ENCODE measurements at regions of chr1 and their contacts with region 1.

Region 1: GRCh38 chr1:153566440-153567379 is 1.1 kb upstream of the S100A2 start:
- DNase-seq: peak; percentile 100
- H3K4me3 Mint-ChIP-seq: peak overlapping the region; percentile 67
- H3K27ac Mint-ChIP-seq: peak overlapping the region; percentile 92
- H3K4me1 Mint-ChIP-seq: peaks cover 64% of the 10 kb centered on the region
- H3K27me3 Mint-ChIP-seq: no peaks in the 10 kb centered on the region
- CTCF ChIP-seq: no peak

Region 2: GRCh38 chr1:153526132-153526543 is 40.6 kb before region 1 on chr1:
- CTCF ChIA-PET with region 1: interaction called, 224 read pairs
- POLR2A ChIA-PET with region 1: interaction called, 2,106 read pairs
- intact Hi-C with region 1: no loop called
- DNase-seq: peak; percentile 94
- H3K4me3 Mint-ChIP-seq: peak overlapping the region; percentile 29
- H3K27ac Mint-ChIP-seq: peak overlapping the region; percentile 85
- H3K4me1 Mint-ChIP-seq: peaks cover 38% of the 10 kb centered on the region
- H3K27me3 Mint-ChIP-seq: no peaks in the 10 kb centered on the region
- CTCF ChIP-seq: no peak

Region 3: GRCh38 chr1:153545067-153546055 is 21.3 kb before region 1 on chr1 and contains the start of gene S100A4:
- CTCF ChIA-PET with region 1: interaction called, 224 read pairs
- POLR2A ChIA-PET with region 1: interaction called, 2,106 read pairs
- intact Hi-C with region 1: loop called (anchors 2 kb)
- DNase-seq: peak; percentile 99
- H3K4me3 Mint-ChIP-seq: peak within 1 kb of the TSS; percentile 72
- H3K27ac Mint-ChIP-seq: peak within 1 kb of the TSS; percentile 92
- H3K4me1 Mint-ChIP-seq: peaks cover 89% of the 10 kb centered on the region
- H3K27me3 Mint-ChIP-seq: no peaks in the 10 kb centered on the region
- CTCF ChIP-seq: no peak
- total RNA-seq, gene S100A4: 27.2 and 60.7 TPM in 2 replicates

Region 4: GRCh38 chr1:153617675-153618074 is 51.0 kb after region 1 on chr1:
- CTCF ChIA-PET with region 1: interaction called, 214 read pairs
- POLR2A ChIA-PET with region 1: interaction called, 280 read pairs
- intact Hi-C with region 1: no loop called
- DNase-seq: peak; percentile 86
- H3K4me3 Mint-ChIP-seq: peak overlapping the region; percentile 90
- H3K27ac Mint-ChIP-seq: peak overlapping the region; percentile 76
- H3K4me1 Mint-ChIP-seq: peaks cover 47% of the 10 kb centered on the region
- H3K27me3 Mint-ChIP-seq: no peaks in the 10 kb centered on the region
- CTCF ChIP-seq: peak; percentile 90

Region 5: GRCh38 chr1:153967082-153968000 is 400.6 kb after region 1 on chr1 and contains the start of gene CREB3L4:
- CTCF ChIA-PET with region 1: interaction called, 3 read pairs
- POLR2A ChIA-PET with region 1: interaction called, 21 read pairs
- intact Hi-C with region 1: no loop called
- DNase-seq: peak; percentile 100
- H3K4me3 Mint-ChIP-seq: peak within 1 kb of the TSS; percentile 95
- H3K27ac Mint-ChIP-seq: peak within 1 kb of the TSS; percentile 94
- H3K4me1 Mint-ChIP-seq: peaks cover 40% of the 10 kb centered on the region
- H3K27me3 Mint-ChIP-seq: no peaks in the 10 kb centered on the region
- CTCF ChIP-seq: peak; percentile 32
- total RNA-seq, gene CREB3L4: 14.7 and 17.6 TPM in 2 replicates

Measured in MCF 10A (cell line).